ENCODE measurements at regions of chr9 and their contacts with region 1.

Region 1: GRCh38 chr9:122092611-122093506 is at the start of gene TTLL11:
- DNase-seq: peak; percentile 93 to 96 (median 95)
- ATAC-seq: peak; percentile 98
- H3K4me3 ChIP-seq: peak within 1 kb of the TSS; percentile 54
- H3K4me3 Mint-ChIP-seq: peak within 1 kb of the TSS; percentile 85 to 99 (median 92)
- H3K27ac ChIP-seq: peak within 1 kb of the TSS; percentile 62
- H3K27ac Mint-ChIP-seq: peak within 1 kb of the TSS; percentile 2 to 88 (median 76)
- H3K4me1 ChIP-seq: peaks cover 10 to 26% of the 10 kb centered on the region in 2 donors
- H3K4me1 Mint-ChIP-seq: peaks cover 25 to 55% (median 46%) of the 10 kb centered on the region in 7 donors
- H3K27me3 ChIP-seq: no peaks in the 10 kb centered on the region
- H3K27me3 Mint-ChIP-seq: peaks cover 0 to 25% (median 0%) of the 10 kb centered on the region in 5 donors
- total RNA-seq, gene TTLL11: 3.0 to 6.2 (median 4.4) TPM

Region 2: GRCh38 chr9:120579750-120580590 is 1512.9 kb before region 1 on chr9 and contains the start of gene CDK5RAP2:
- CTCF ChIA-PET with region 1: no interaction called
- POLR2A ChIA-PET with region 1: no interaction called
- intact Hi-C with region 1: loop called in 1 of 2 experiments (anchors 5 kb)
- DNase-seq: peak; percentile 77 to 94 (median 92)
- ATAC-seq: peak; percentile 99
- H3K4me3 ChIP-seq: peak within 1 kb of the TSS; percentile 85
- H3K4me3 Mint-ChIP-seq: peak within 1 kb of the TSS; percentile 86 to 98 (median 94)
- H3K27ac ChIP-seq: peak within 1 kb of the TSS; percentile 81
- H3K27ac Mint-ChIP-seq: peak within 1 kb of the TSS; percentile 88 to 95 (median 91)
- H3K4me1 ChIP-seq: peaks cover 15 to 17% of the 10 kb centered on the region in 2 donors
- H3K4me1 Mint-ChIP-seq: peaks cover 29 to 68% (median 62%) of the 10 kb centered on the region in 7 donors
- H3K27me3 ChIP-seq: no peaks in the 10 kb centered on the region
- H3K27me3 Mint-ChIP-seq: peaks cover 0 to 3% (median 0%) of the 10 kb centered on the region in 5 donors
- total RNA-seq, gene CDK5RAP2: 62.2 to 98.1 (median 78.1) TPM

Region 3: DNA sequence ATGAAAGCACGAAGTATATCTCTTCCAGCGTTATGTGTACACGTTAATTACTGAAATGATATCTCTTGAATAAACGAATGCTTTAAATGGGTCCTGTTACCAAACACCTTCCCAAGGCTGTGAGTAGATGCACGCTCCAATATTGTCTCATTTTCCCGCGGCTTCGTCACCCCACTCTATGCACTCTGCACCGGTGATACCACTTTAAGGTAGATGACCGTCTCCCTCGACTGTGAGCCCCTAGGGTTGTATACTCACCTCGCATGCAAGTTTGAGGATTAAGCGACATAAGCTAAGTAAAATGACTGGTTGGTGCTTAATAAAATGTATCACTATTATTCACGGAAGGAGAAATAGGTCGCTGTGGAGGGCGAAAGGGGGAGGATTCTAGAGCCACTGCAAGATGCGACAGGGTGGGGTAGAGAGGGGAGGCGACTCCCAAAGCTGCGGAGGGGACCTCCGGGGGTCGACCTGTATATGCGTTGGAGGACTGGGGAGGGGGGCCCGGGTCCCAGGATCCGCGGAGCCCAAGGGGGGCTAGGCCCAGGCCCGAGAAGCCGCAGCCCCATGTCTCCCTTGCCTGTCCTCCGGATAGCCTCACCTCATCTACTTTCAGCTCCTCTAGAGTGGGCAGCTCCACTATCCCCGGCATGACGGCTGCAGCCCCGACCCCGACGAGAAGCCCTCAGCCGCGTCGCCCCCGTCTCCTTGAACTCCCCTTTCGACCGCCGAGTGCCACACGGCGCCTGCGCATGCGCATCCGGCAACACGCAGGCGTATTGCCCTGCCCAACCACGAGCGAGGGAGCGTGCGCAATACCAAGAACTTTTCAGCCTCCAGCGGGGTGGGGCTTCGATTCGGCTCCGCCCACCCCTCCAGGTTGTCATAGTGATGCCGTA is 66.4 kb after region 1 on chr9 and contains the starts of genes MORN5 and NDUFA8:
- CTCF ChIA-PET with region 1: no interaction called
- POLR2A ChIA-PET with region 1: no interaction called
- intact Hi-C with region 1: loop called (anchors 1 to 2 kb)
- DNase-seq: peak; percentile 94 to 97 (median 96)
- ATAC-seq: peak; percentile 98
- H3K4me3 ChIP-seq: peak within 1 kb of the TSS; percentile 74
- H3K4me3 Mint-ChIP-seq: peak within 1 kb of the TSS; percentile 94 to 100 (median 99)
- H3K27ac ChIP-seq: peak within 1 kb of the TSS; percentile 88
- H3K27ac Mint-ChIP-seq: peak within 1 kb of the TSS; percentile 90 to 99 (median 96)
- H3K4me1 ChIP-seq: peaks cover 7% of the 10 kb centered on the region in 2 donors
- H3K4me1 Mint-ChIP-seq: peaks cover 23 to 51% (median 47%) of the 10 kb centered on the region in 7 donors
- H3K27me3 ChIP-seq: no peaks in the 10 kb centered on the region
- H3K27me3 Mint-ChIP-seq: peaks cover 8 to 25% (median 20%) of the 10 kb centered on the region in 5 donors
- total RNA-seq, gene MORN5: not detected
- total RNA-seq, gene NDUFA8: 6.7 to 35.0 (median 15.6) TPM

Region 4: DNA sequence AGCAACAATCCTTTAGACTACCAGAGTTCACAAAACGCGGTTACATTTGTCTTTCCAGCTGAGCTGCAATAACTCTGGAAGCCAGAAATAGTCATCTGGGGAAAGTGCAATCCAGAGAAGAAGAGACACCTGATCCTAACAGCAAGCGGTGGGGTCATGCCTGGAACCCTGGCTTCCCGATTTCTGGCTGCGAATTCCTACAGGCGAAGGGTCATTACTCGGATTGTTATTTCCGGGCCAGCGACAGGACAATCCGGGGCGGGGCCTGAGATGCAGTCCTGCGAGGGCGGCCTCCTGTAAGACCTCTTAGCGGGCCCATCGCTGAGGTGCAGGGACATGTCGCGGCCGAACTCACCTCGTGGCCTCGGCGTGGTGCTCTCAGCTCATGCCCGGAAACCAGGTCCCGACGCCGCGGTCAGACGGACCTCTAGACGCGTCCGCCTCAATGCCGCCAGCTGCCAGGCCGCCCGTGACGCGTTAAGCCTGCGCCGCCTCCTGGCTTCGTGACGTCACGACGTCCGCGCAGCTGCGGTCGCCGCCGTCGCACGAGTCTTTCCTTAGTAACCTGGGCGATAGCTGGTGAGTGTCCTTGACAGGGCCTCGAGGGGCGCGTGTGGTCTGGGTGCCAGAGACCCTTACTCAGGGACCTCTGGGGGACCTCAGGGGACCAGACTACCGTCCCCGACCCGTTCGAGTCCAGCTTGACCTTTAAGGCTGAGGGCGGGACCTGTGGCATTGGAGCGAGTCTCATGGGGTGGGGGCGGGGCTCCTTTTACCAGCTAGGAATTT is 171.7 kb after region 1 on chr9 and contains the starts of genes MRRF and RBM18:
- CTCF ChIA-PET with region 1: no interaction called
- POLR2A ChIA-PET with region 1: no interaction called
- intact Hi-C with region 1: loop called (anchors 1 kb)
- DNase-seq: peak; percentile 80 to 93 (median 88)
- ATAC-seq: peak; percentile 92
- H3K4me3 ChIP-seq: peak within 1 kb of the TSS; percentile 93
- H3K4me3 Mint-ChIP-seq: peak within 1 kb of the TSS; percentile 88 to 100 (median 98)
- H3K27ac ChIP-seq: peak within 1 kb of the TSS; percentile 94
- H3K27ac Mint-ChIP-seq: peak within 1 kb of the TSS; percentile 76 to 100 (median 99)
- H3K4me1 ChIP-seq: peaks cover 18 to 25% of the 10 kb centered on the region in 2 donors
- H3K4me1 Mint-ChIP-seq: peaks cover 40 to 71% (median 61%) of the 10 kb centered on the region in 7 donors
- H3K27me3 ChIP-seq: no peaks in the 10 kb centered on the region
- H3K27me3 Mint-ChIP-seq: peaks cover 0 to 2% (median 0%) of the 10 kb centered on the region in 5 donors
- total RNA-seq, gene MRRF: 28.1 to 35.8 (median 33.3) TPM
- total RNA-seq, gene RBM18: 14.2 to 22.9 (median 15.8) TPM

Region 5: DNA sequence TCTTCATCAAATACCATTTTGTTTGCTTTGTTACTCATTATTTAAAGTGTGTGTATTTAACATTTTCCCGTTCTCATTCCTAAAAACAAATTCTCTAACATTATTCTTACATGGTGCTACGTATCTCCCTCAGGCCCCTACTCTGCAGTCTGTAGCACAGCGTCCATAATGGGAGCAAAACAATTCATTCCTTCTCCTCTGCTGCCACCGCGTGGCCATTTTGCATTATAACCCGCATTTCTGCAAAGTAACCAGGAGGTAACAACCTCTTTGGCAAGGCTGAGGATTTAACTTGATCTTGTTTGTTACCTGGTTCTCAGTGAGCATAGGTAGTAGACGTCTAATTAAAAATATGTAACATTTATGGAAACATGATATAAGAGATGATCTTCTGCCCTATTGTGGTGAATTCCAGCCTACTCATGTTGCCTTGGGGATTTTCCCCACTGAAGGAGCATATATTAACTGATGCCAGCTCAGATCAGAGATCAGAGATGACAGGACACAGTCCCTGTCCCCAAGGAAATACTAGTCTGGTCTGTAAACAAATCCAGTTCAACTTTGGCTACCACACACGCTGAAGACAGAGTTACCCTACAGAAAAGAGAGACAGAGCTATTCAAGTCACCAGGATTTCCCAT is 717.6 kb after region 1 on chr9:
- CTCF ChIA-PET with region 1: interaction called, 6 read pairs
- POLR2A ChIA-PET with region 1: no interaction called
- intact Hi-C with region 1: loop called (anchors 1 kb)
- DNase-seq: peak; percentile 52 to 79 (median 72)
- ATAC-seq: peak; percentile 95
- H3K4me3 ChIP-seq: no peak overlapping the region
- H3K4me3 Mint-ChIP-seq: no peak overlapping the region
- H3K27ac ChIP-seq: no peak overlapping the region
- H3K27ac Mint-ChIP-seq: no peak overlapping the region
- H3K4me1 ChIP-seq: peaks cover 0 to under 1% of the 10 kb centered on the region in 2 donors
- H3K4me1 Mint-ChIP-seq: peaks cover 9 to 24% (median 16%) of the 10 kb centered on the region in 7 donors
- H3K27me3 ChIP-seq: no peaks in the 10 kb centered on the region
- H3K27me3 Mint-ChIP-seq: no peaks in the 10 kb centered on the region

Region 6: DNA sequence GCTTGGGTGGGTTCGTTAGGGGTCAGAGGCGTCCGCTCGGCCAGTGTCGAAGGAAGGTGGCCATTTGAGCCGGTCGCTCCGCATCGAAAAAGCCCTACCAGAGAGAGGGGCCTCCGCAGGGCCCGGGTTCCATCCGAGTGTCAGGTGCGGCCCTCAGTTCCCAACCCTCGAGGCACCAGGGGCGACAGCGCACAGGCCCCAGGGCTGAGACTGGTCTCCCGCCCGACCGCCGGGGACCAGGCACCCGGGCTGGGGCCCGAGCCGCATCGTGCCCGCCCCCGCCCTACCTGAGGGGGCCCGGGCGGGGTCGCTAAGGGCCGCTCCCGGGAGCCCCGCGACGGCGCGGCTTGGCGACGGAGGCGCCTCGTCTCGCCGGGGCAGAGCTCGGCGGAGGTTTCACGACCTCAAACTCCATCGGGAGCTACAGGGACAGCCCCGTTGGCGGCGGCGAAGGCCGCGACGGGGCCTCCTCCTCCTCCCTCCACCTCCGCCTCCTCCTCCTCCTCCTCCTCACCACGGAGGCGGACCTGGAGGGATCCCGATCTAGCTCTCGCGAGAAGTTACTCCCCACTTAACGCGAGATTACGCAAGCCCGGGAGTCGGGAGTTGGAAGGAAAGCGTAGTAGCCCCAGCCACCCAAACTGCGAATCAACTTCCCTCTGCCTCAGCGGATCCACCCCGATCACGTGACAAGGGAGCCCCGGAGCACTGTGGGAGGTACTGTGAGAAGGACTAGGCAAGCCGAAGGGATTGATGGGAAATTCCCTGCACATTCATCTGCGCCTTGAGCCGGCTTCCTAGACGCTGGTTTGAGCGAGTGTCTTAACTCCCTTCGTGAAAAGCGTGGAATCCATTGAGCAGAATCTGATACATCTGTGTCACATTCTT is 812.2 kb after region 1 on chr9 and contains the start of gene RC3H2:
- CTCF ChIA-PET with region 1: no interaction called
- POLR2A ChIA-PET with region 1: no interaction called
- intact Hi-C with region 1: loop called (anchors 10 kb)
- DNase-seq: peak; percentile 80 to 99 (median 97)
- ATAC-seq: peak; percentile 94
- H3K4me3 ChIP-seq: peak within 1 kb of the TSS; percentile 74
- H3K4me3 Mint-ChIP-seq: peak within 1 kb of the TSS; percentile 89 to 96 (median 93)
- H3K27ac ChIP-seq: peak within 1 kb of the TSS; percentile 100
- H3K27ac Mint-ChIP-seq: peak within 1 kb of the TSS; percentile 93 to 98 (median 95)
- H3K4me1 ChIP-seq: peaks cover 14 to 21% of the 10 kb centered on the region in 2 donors
- H3K4me1 Mint-ChIP-seq: peaks cover 11 to 47% (median 40%) of the 10 kb centered on the region in 7 donors
- H3K27me3 ChIP-seq: no peaks in the 10 kb centered on the region
- H3K27me3 Mint-ChIP-seq: peaks cover 0 to 3% (median 0%) of the 10 kb centered on the region in 5 donors
- total RNA-seq, gene RC3H2: 52.3 to 66.4 (median 57.0) TPM

Region 7: DNA sequence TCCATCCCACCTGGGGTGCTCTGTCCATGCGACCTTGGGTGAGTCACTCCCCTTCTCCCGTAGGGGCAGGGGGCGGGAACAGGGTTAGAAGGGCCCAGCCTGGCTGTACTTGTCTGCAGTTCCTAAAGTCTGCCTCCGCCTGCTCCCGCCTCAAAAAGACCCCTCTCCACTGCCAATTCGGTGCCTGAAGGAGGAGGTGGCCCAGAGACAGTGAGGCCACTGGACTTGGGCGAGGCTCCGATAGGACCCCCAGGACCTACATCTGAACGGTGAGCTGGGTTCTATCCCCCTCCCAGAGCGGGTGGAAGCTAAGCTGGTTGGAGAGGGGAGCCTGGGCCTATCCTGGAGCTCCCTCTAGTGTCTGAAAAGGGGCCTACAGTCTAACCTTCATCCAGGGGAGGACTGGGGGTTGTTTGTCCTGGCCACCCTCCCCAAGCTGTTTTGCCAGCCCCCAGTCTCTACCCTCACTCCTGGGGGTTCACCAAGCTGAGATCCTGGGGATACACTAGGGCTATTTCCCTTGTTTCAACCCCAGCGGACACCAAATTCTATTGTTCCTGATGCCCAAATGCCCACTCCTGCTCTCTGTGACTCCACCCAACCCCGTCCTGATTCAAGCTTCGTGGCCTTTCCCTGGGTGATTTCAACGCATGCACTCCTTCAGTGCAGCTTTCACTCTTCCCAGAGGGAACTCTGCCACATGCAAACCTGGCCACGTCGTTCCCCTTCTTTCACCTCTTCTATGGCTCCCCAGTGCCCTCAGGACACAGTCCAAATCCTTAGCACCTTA is 1257.0 kb after region 1 on chr9:
- CTCF ChIA-PET with region 1: no interaction called
- POLR2A ChIA-PET with region 1: no interaction called
- intact Hi-C with region 1: loop called in 1 of 2 experiments (anchors 10 kb)
- DNase-seq: peak; percentile 33 to 80 (median 65)
- ATAC-seq: peak; percentile 85
- H3K4me3 ChIP-seq: no peak overlapping the region
- H3K4me3 Mint-ChIP-seq: no peak overlapping the region
- H3K27ac ChIP-seq: no peak overlapping the region
- H3K27ac Mint-ChIP-seq: peak overlapping the region in 2 of 9 donors; percentile 34 to 35
- H3K4me1 ChIP-seq: no peaks in the 10 kb centered on the region
- H3K4me1 Mint-ChIP-seq: peaks cover 0 to 5% (median 4%) of the 10 kb centered on the region in 7 donors
- H3K27me3 ChIP-seq: no peaks in the 10 kb centered on the region
- H3K27me3 Mint-ChIP-seq: peaks cover 0 to 9% (median 0%) of the 10 kb centered on the region in 5 donors